Common myeloid progenitor, CD34-positive (primary cell): ENCODE measurements at regions of chr5 and their contacts with region 1.

Region 1: GRCh38 chr5:170623576-170624181 is 119.9 kb downstream of the KCNIP1 start:
- DNase-seq: peak; percentile 65 to 77 (median 73)
- H3K4me3 ChIP-seq: no peak overlapping the region
- H3K27ac ChIP-seq: no peak overlapping the region
- H3K4me1 ChIP-seq: peaks cover 0 to 3% (median 0%) of the 10 kb centered on the region in 4 experiments
- H3K27me3 ChIP-seq: no peaks in the 10 kb centered on the region

Region 2: DNA sequence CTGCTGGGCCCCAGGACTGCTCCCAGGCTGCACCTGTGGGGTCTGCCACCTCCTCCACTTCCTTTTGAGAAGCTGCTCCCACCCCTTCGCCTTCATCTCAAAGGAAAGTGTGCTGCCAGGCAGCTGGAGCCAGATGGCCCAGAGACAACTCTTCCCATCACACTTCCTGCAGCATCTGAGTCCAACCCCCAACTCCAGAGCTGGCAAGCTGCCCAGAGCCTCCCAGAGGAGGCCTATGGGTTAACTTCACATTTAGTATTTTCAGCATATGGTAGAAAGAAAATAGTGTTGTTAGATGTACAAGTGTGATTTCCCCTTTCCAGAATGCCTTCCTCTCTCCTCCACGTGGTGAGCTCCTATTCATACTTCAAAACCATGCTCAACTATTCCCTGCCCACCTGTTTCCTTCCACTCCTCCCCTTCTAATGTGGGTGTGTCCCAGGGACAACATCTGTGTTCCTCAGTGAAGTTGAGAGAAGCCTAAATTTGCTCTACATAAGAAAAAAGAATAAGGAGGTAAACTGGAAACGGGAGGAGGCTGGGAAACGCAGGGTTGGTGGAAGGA is 195.9 kb before region 1 on chr5:
- CTCF ChIA-PET with region 1: interaction called, 106 read pairs
- POLR2A ChIA-PET with region 1: no interaction called
- DNase-seq: peak in 2 of 3 donors; percentile 24 to 27
- H3K4me3 ChIP-seq: no peak overlapping the region
- H3K27ac ChIP-seq: no peak overlapping the region
- H3K4me1 ChIP-seq: peaks cover 0 to 34% (median 16%) of the 10 kb centered on the region in 4 experiments
- H3K27me3 ChIP-seq: no peaks in the 10 kb centered on the region

Region 3: GRCh38 chr5:170434966-170435605 is 188.6 kb before region 1 on chr5:
- CTCF ChIA-PET with region 1: interaction called, 106 read pairs
- POLR2A ChIA-PET with region 1: no interaction called
- DNase-seq: peak; percentile 54 to 76 (median 66)
- H3K4me3 ChIP-seq: no peak overlapping the region
- H3K27ac ChIP-seq: no peak overlapping the region
- H3K4me1 ChIP-seq: peaks cover 0 to 3% (median 0%) of the 10 kb centered on the region in 4 experiments
- H3K27me3 ChIP-seq: peaks cover 0 to 6% (median 0%) of the 10 kb centered on the region in 5 experiments

Region 4: GRCh38 chr5:170603578-170604565 is 19.8 kb before region 1 on chr5:
- CTCF ChIA-PET with region 1: interaction called, 20 read pairs
- POLR2A ChIA-PET with region 1: no interaction called
- DNase-seq: peak; percentile 68 to 80 (median 69)
- H3K4me3 ChIP-seq: no peak overlapping the region
- H3K27ac ChIP-seq: no peak overlapping the region
- H3K4me1 ChIP-seq: peaks cover 0 to 8% (median 3%) of the 10 kb centered on the region in 4 experiments
- H3K27me3 ChIP-seq: peaks cover 0 to 18% (median 0%) of the 10 kb centered on the region in 5 experiments